GM13976 (cell line): ENCODE measurements at regions of chr6 and their contacts with region 1.

Region 1: DNA sequence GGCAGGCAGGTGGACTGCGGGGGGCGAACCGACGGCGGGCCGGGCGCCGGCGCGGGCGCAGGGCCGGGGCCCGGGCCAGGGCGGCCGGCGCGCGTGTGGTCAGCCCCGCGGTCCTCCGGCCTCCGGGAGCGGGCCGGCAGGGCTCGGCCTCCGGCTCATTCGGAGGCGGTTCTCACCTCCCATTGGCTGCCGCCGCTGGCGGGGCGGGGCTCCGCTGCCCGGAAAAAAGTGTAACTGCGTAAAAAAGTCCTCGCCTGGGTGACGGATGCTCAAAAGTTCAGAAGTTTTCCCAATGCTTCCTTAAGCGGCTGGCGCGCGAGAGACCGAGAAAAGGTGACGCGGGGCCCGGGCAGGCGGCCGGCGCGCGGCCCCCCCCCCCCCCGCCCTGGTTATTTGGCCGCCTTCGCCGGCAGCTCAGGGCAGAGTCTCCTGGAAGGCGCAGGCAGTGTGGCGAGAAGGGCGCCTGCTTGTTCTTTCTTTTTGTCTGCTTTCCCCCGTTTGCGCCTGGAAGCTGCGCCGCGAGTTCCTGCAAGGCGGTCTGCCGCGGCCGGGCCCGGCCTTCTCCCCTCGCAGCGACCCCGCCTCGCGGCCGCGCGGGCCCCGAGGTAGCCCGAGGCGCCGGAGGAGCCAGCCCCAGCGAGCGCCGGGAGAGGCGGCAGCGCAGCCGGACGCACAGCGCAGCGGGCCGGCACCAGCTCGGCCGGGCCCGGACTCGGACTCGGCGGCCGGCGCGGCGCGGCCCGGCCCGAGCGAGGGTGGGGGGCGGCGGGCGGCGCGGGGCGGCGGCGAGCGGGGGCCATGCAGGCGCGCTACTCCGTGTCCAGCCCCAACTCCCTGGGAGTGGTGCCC is at the start of gene FOXC1:
- DNase-seq: peak; percentile 91
- CTCF ChIP-seq: no peak

Region 2: GRCh38 chr6:1062786-1063545 is 546.9 kb before region 1 on chr6:
- in situ Hi-C with region 1: no loop called
- DNase-seq: no peak
- CTCF ChIP-seq: peak; percentile 12

Region 3: DNA sequence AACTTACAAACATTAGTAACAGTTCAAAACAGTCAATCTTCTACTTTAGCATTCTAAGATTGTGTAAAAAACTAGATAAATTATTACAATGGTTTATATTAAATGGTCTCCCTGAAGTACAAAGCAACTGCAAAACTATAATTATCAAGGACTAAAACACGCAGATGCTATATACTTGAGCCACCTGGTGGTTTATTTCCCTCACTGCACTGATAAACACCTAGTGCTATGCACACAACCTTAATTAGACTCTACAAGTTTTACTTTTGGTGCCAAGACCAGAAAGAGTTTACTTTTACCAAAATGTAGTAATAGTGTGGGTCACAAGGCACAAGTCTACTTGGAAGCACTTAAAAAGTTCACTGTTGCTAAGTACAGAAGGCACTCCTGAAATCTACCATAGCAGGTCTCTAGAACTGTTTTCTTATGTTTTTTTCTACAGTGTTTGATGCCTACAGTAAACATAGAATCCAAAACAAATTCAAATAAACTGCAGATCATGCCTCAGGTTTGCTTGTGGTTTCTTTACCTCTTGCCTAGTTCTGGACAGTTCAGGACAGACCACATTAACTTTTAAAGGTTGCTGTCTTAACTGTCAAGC is 586.3 kb after region 1 on chr6:
- in situ Hi-C with region 1: loop called (anchors 25 kb)
- DNase-seq: peak; percentile 38
- CTCF ChIP-seq: peak; percentile 59